ENCODE measurements at regions of chr20 and their contacts with region 1.

Region 1: GRCh38 chr20:57596998-57597939 is 23.0 kb downstream of the ZBP1 start:
- DNase-seq: peak in 34 of 35 experiments; percentile 39 to 88 (median 68)
- ATAC-seq: peak; percentile 79 to 92 (median 86)
- H3K4me3 ChIP-seq: peak overlapping the region in 1 of 2 donors; percentile 8
- H3K4me3 Mint-ChIP-seq: no peak overlapping the region
- H3K27ac ChIP-seq: no peak overlapping the region
- H3K27ac Mint-ChIP-seq: no peak overlapping the region
- H3K4me1 ChIP-seq: peaks cover 0 to 16% of the 10 kb centered on the region in 2 experiments
- H3K4me1 Mint-ChIP-seq: peaks cover 2 to 15% (median 6%) of the 10 kb centered on the region in 3 donors
- H3K27me3 ChIP-seq: peaks cover 2 to 31% of the 10 kb centered on the region in 2 experiments
- H3K27me3 Mint-ChIP-seq: peaks cover 0 to 3% of the 10 kb centered on the region in 2 donors

Region 2: GRCh38 chr20:56551571-56551970 is 1045.7 kb before region 1 on chr20:
- CTCF ChIA-PET with region 1: interaction called in 1 of 2 experiments, 12 read pairs
- POLR2A ChIA-PET with region 1: no interaction called
- DNase-seq: no peak
- ATAC-seq: no peak
- H3K4me3 ChIP-seq: no peak overlapping the region
- H3K4me3 Mint-ChIP-seq: no peak overlapping the region
- H3K27ac ChIP-seq: no peak overlapping the region
- H3K27ac Mint-ChIP-seq: no peak overlapping the region
- H3K4me1 ChIP-seq: no peaks in the 10 kb centered on the region
- H3K4me1 Mint-ChIP-seq: peaks cover 0 to 4% (median 3%) of the 10 kb centered on the region in 3 donors
- H3K27me3 ChIP-seq: no peaks in the 10 kb centered on the region
- H3K27me3 Mint-ChIP-seq: peaks cover 0 to 2% of the 10 kb centered on the region in 2 donors

Region 3: DNA sequence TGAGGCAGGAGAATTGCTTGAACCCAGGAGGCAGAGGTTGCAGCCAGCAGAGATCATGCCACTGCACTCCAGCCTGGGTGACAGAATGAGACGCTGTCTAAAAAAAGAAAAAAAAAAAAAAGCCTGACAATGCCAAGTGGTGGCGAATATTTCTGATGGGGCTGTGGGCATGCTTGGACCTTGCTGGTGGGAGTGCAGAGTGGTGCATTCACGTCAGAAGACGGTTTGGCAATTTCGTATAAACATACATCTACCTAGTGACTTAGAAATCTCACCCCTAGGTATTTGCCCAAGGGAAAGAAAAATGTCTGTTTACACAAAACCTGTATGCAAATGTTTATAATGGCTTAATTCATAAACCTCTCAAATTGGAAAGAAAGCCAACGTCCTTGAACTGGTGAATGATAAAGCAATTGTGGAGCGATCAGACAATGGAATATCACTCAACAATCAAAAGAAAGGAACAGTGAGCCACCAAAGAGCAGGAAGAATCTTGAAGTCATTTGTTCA is 105.8 kb before region 1 on chr20:
- CTCF ChIA-PET with region 1: no interaction called
- POLR2A ChIA-PET with region 1: no interaction called
- DNase-seq: no peak
- ATAC-seq: no peak
- H3K4me3 ChIP-seq: no peak overlapping the region
- H3K4me3 Mint-ChIP-seq: no peak overlapping the region
- H3K27ac ChIP-seq: no peak overlapping the region
- H3K27ac Mint-ChIP-seq: no peak overlapping the region
- H3K4me1 ChIP-seq: no peaks in the 10 kb centered on the region
- H3K4me1 Mint-ChIP-seq: peaks cover 6 to 7% (median 6%) of the 10 kb centered on the region in 3 donors
- H3K27me3 ChIP-seq: peaks cover 0 to 7% of the 10 kb centered on the region in 2 experiments
- H3K27me3 Mint-ChIP-seq: peaks cover 5 to 6% of the 10 kb centered on the region in 2 donors

Region 4: GRCh38 chr20:57522380-57522993 is 74.8 kb before region 1 on chr20:
- CTCF ChIA-PET with region 1: no interaction called
- POLR2A ChIA-PET with region 1: interaction called in 1 of 2 experiments, 10 read pairs
- DNase-seq: no peak
- ATAC-seq: no peak
- H3K4me3 ChIP-seq: no peak overlapping the region
- H3K4me3 Mint-ChIP-seq: no peak overlapping the region
- H3K27ac ChIP-seq: no peak overlapping the region
- H3K27ac Mint-ChIP-seq: no peak overlapping the region
- H3K4me1 ChIP-seq: no peaks in the 10 kb centered on the region
- H3K4me1 Mint-ChIP-seq: peaks cover 8 to 16% (median 11%) of the 10 kb centered on the region in 3 donors
- H3K27me3 ChIP-seq: peaks cover 0 to 8% of the 10 kb centered on the region in 2 experiments
- H3K27me3 Mint-ChIP-seq: no peaks in the 10 kb centered on the region

Measured in T-cell (primary cell).